PC-3 (cell line): ENCODE measurements at regions of chr5 and their contacts with region 1.

Region 1: DNA sequence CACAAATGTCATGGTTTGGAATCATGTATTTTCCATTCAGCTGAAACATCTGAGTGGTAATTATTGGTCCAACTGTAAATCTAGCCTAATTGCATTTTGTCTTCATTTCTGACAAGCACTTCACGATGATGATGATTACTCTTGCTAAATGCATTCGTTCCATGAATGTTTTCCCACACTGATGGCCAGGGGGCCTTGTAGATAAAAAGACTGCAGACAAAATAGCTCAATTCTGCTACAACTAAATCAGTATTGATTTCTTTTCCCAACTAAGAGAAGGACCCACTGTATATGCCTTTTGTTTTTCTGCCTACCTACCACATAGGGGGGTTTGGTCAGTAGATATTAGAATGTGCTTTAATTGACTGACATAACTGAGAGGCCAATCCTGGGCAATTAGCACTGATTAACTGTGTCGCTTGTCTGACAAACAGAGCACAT is 1351.3 kb upstream of the NUDT12 start:
- DNase-seq: no peak
- ATAC-seq: no peak
- H3K4me3 ChIP-seq: no peak overlapping the region
- H3K27ac ChIP-seq: no peak overlapping the region
- H3K4me1 ChIP-seq: peaks cover 38% of the 10 kb centered on the region
- H3K27me3 ChIP-seq: no peaks in the 10 kb centered on the region
- CTCF ChIP-seq: no peak

Region 2: GRCh38 chr5:103808464-103809106 is 1105.3 kb before region 1 on chr5:
- CTCF ChIA-PET with region 1: no interaction called
- POLR2A ChIA-PET with region 1: no interaction called
- intact Hi-C with region 1: loop called (anchors 10 kb)
- DNase-seq: peak; percentile 85
- ATAC-seq: peak; percentile 94
- H3K4me3 ChIP-seq: no peak overlapping the region
- H3K27ac ChIP-seq: no peak overlapping the region
- H3K4me1 ChIP-seq: peaks cover 6% of the 10 kb centered on the region
- H3K27me3 ChIP-seq: no peaks in the 10 kb centered on the region
- CTCF ChIP-seq: peak; percentile 100

Region 3: GRCh38 chr5:104412649-104413246 is 501.1 kb before region 1 on chr5:
- CTCF ChIA-PET with region 1: no interaction called
- POLR2A ChIA-PET with region 1: no interaction called
- intact Hi-C with region 1: loop called (anchors 10 kb)
- DNase-seq: peak; percentile 64
- ATAC-seq: peak; percentile 64
- H3K4me3 ChIP-seq: no peak overlapping the region
- H3K27ac ChIP-seq: no peak overlapping the region
- H3K4me1 ChIP-seq: peaks cover 13% of the 10 kb centered on the region
- H3K27me3 ChIP-seq: no peaks in the 10 kb centered on the region
- CTCF ChIP-seq: peak; percentile 79

Region 4: GRCh38 chr5:104702212-104702611 is 211.6 kb before region 1 on chr5:
- CTCF ChIA-PET with region 1: no interaction called
- POLR2A ChIA-PET with region 1: no interaction called
- intact Hi-C with region 1: loop called (anchors 1 kb)
- DNase-seq: peak; percentile 95
- ATAC-seq: peak; percentile 77
- H3K4me3 ChIP-seq: 0 out of 2 replicates have a peak overlapping the region, but pooled peaks have one; percentile 12
- H3K27ac ChIP-seq: peak overlapping the region; percentile 88
- H3K4me1 ChIP-seq: peaks cover 35% of the 10 kb centered on the region
- H3K27me3 ChIP-seq: no peaks in the 10 kb centered on the region
- CTCF ChIP-seq: no peak

Region 5: GRCh38 chr5:104998572-104998971 is 84.7 kb after region 1 on chr5:
- CTCF ChIA-PET with region 1: no interaction called
- POLR2A ChIA-PET with region 1: no interaction called
- intact Hi-C with region 1: loop called (anchors 2 kb)
- DNase-seq: peak; percentile 65
- ATAC-seq: peak; percentile 60
- H3K4me3 ChIP-seq: no peak overlapping the region
- H3K27ac ChIP-seq: peak overlapping the region; percentile 80
- H3K4me1 ChIP-seq: peaks cover 18% of the 10 kb centered on the region
- H3K27me3 ChIP-seq: no peaks in the 10 kb centered on the region
- CTCF ChIP-seq: no peak